ENCODE measurements at regions of chr15 and their contacts with region 1.

Region 1: GRCh38 chr15:50107591-50108408 is 11.2 kb downstream of the ATP8B4 start:
- DNase-seq: peak; percentile 45
- ATAC-seq: peak; percentile 73
- H3K4me3 Mint-ChIP-seq: peak overlapping the region; percentile 71
- H3K27ac Mint-ChIP-seq: peak overlapping the region; percentile 91
- H3K4me1 Mint-ChIP-seq: peaks cover 76% of the 10 kb centered on the region
- H3K27me3 Mint-ChIP-seq: no peaks in the 10 kb centered on the region

Region 2: DNA sequence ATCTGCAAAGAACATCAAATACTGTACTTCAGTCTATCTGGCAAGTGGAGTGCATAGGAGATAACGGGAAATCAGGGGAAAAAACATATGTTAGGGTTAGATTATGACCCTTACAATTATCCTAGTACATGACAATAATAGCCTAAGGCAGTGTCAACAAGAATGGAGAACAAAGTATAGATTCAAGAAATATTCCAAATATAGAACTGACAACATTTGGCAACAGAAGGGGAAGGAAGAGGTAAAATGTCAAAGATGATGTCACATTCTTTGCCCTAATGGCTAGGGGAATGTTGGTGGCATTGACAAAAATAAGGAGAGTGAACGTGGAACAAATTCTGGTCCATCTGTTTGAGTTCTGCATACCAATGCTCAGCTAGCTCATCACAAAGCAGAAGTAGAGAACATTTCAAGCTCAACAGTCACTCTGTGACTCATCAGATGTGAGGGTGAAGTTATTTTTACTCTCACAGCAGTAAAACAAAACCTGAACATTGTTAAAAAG is 26.8 kb after region 1 on chr15:
- POLR2A ChIA-PET with region 1: interaction called, 13 read pairs
- DNase-seq: no peak
- ATAC-seq: peak; percentile 43
- H3K4me3 Mint-ChIP-seq: peak overlapping the region; percentile 42
- H3K27ac Mint-ChIP-seq: peak overlapping the region; percentile 62
- H3K4me1 Mint-ChIP-seq: peaks cover 33% of the 10 kb centered on the region
- H3K27me3 Mint-ChIP-seq: no peaks in the 10 kb centered on the region